GM12878 (cell line): ENCODE measurements at regions of chr15 and their contacts with region 1.

Region 1: GRCh38 chr15:74552773-74553441 is 11.9 kb downstream of the ARID3B start:
- DNase-seq: no peak
- ATAC-seq: peak; percentile 60
- H3K4me3 ChIP-seq: peak overlapping the region; percentile 13; the same call in 1 of the 2 replicates
- H3K27ac ChIP-seq: peak overlapping the region; percentile 24
- H3K4me1 ChIP-seq: peaks cover 17% of the 10 kb centered on the region; the same call in 1 of the 2 replicates
- H3K27me3 ChIP-seq: no peaks in the 10 kb centered on the region
- CTCF ChIP-seq: no peak
- EP300 ChIP-seq: no peak
- POLR2A ChIP-seq: no peak
- RAD21 ChIP-seq: no peak

Region 2: DNA sequence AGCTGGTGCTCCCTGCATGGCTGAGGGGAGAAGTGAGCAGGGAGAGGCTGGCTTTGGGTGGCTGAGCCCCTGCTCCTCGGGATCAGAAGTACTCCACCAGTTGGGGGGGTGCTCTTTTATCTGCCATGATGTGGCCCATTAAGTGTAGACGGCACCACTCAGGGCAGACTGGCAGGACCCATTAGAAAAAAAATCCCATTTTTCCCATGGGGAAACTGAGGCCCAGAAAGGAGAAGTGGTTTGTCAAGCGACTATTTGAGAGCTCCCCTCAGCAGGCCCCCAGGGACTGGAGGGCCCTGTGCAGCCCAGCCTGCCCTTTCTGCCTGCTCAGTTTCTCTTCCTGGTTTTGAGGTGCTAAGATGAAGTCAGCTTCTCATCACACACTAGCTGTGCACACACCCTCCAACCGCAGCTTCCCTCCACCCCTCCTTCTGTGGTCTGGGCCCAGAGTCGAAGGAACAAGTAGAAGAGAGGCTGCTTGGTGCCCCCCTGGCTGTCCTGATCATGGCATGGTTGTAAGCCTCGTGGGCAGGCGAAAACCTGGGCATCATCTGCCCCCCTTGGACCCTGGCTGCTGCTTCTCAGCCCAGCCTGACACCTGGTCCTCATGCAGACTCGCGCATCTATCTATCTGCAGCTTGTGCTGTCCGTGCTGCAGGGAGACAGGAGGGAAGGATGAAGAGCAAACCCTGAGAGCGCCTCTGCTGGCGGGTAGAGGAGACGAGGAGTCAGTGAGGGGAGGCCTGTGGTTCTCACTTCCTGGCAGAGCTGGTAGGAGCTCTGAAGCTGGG is 234.5 kb after region 1 on chr15:
- CTCF ChIA-PET with region 1: no interaction called
- POLR2A ChIA-PET with region 1: interaction called, 10 read pairs
- RAD21 ChIA-PET with region 1: interaction called, 3 read pairs
- SMC1A ChIA-PET with region 1: no interaction called
- in situ Hi-C with region 1: no loop called
- intact Hi-C with region 1: no loop called
- DNase-seq: peak; percentile 97
- ATAC-seq: peak; percentile 58
- H3K4me3 ChIP-seq: peak overlapping the region; percentile 94
- H3K27ac ChIP-seq: peak overlapping the region; percentile 96
- H3K4me1 ChIP-seq: peaks cover 55% of the 10 kb centered on the region
- H3K27me3 ChIP-seq: no peaks in the 10 kb centered on the region
- CTCF ChIP-seq: peak; percentile 79 to 93 (median 82)
- EP300 ChIP-seq: peak; percentile 83 to 88
- POLR2A ChIP-seq: peak; percentile 76
- RAD21 ChIP-seq: peak; percentile 45; the same call in 1 of the 2 replicates

Region 3: DNA sequence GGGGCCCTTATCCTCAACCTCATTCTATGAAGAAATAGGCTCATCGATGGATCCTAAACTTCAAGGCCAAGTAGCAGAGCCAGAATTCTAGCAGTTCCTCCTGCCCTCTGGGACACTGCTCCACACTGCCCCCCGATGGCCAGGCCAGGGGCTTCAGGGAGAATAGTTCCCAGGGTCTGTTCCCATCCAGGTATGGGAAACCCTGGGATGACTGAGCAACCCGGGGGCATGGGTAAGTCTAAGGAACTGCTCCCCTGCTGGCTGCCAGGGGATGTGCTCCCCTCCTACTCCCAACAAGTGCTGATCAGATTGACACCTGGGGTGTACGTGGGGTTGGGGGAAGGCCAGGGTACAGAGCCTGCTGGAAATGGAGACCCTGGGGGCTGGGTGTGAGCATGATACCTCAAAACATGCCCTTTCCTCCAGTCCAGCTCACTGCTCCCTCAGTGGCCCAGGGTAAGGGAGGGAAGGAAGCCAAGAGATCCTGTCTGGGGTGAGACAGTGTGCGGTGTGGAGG is 282.5 kb after region 1 on chr15:
- CTCF ChIA-PET with region 1: no interaction called
- POLR2A ChIA-PET with region 1: no interaction called
- RAD21 ChIA-PET with region 1: no interaction called
- SMC1A ChIA-PET with region 1: no interaction called
- in situ Hi-C with region 1: no loop called
- intact Hi-C with region 1: no loop called
- DNase-seq: no peak
- ATAC-seq: peak; percentile 69
- H3K4me3 ChIP-seq: no peak overlapping the region
- H3K27ac ChIP-seq: no peak overlapping the region
- H3K4me1 ChIP-seq: no peaks in the 10 kb centered on the region
- H3K27me3 ChIP-seq: no peaks in the 10 kb centered on the region
- CTCF ChIP-seq: peak; percentile 65 to 86 (median 83)
- EP300 ChIP-seq: no peak
- POLR2A ChIP-seq: no peak
- RAD21 ChIP-seq: peak; percentile 69